ENCODE measurements at regions of chr6 and their contacts with region 1.

Region 1: GRCh38 chr6:111259089-111259831 is 172.0 kb downstream of the SLC16A10 start:
- DNase-seq: peak; percentile 97
- ATAC-seq: peak; percentile 93
- H3K4me3 Mint-ChIP-seq: peak overlapping the region; percentile 84
- H3K27ac Mint-ChIP-seq: peak overlapping the region; percentile 87
- H3K4me1 Mint-ChIP-seq: peaks cover 30% of the 10 kb centered on the region
- H3K27me3 Mint-ChIP-seq: no peaks in the 10 kb centered on the region
- CTCF ChIP-seq: peak; percentile 89

Region 2: DNA sequence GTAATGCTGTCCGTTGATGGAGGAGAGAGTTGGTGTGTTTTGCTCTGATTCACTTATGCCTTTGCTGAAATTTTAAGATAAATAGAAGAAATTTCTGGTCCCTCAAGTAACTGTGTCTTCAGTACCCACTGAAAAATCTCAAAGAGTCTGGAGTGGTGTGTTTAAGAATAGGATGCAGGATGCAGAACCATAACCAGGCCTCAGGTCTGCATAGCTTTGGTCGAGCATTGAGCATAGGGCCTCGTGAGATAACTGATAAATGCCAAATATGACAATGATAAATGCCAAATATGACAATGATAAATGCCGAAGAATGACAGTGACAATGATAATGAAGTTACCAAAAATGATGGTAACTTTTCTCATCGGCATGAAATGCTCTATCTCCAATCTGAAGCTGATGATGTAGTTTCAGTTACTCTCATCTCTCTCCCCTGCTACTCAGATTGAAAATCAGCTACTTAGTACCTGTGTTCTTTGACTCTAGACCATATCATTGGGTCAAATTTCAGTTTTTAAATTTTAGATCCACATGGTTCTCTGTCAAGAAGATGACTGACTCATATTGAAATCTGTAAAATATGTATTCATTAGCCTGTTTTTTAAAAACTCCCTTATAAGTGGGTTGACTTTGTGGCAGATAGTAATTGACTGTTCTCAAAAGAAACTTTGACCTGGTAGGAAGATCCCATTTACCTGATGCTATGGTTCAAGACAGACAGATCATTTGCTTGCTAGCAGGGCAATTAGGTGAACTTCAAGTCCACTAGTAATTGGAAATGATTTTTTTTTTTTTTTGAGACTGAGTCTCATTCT is 75.3 kb before region 1 on chr6:
- CTCF ChIA-PET with region 1: no interaction called
- POLR2A ChIA-PET with region 1: no interaction called
- intact Hi-C with region 1: no loop called
- DNase-seq: no peak
- ATAC-seq: no peak
- H3K4me3 Mint-ChIP-seq: no peak overlapping the region
- H3K27ac Mint-ChIP-seq: no peak overlapping the region
- H3K4me1 Mint-ChIP-seq: no peaks in the 10 kb centered on the region
- H3K27me3 Mint-ChIP-seq: no peaks in the 10 kb centered on the region
- CTCF ChIP-seq: no peak

Region 3: GRCh38 chr6:111230351-111231089 is 28.7 kb before region 1 on chr6:
- CTCF ChIA-PET with region 1: no interaction called
- POLR2A ChIA-PET with region 1: no interaction called
- intact Hi-C with region 1: no loop called
- DNase-seq: no peak
- ATAC-seq: no peak
- H3K4me3 Mint-ChIP-seq: no peak overlapping the region
- H3K27ac Mint-ChIP-seq: no peak overlapping the region
- H3K4me1 Mint-ChIP-seq: no peaks in the 10 kb centered on the region
- H3K27me3 Mint-ChIP-seq: peaks cover 6% of the 10 kb centered on the region
- CTCF ChIP-seq: no peak

Region 4: DNA sequence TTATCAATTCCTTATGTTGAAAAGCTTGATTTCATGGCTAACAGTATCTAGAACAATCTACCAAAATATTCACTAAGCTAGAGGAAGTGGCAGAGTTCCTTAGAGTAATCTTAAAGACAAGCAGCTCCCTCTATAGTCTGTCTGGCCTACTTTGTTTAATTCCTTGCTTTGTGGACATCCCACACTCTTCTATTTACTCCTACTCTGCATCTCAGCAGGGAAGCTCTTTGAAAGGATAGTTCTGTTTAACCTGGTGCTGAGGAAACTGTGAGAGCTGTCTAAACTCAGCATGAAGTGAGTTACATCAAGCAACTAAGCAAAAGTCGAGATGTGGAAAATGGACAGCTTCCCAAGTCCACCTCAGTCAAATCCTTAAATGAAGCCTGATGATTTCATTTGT is 219.5 kb after region 1 on chr6:
- CTCF ChIA-PET with region 1: interaction called, 86 read pairs
- POLR2A ChIA-PET with region 1: interaction called, 79 read pairs
- intact Hi-C with region 1: loop called (anchors 1 kb)
- DNase-seq: no peak
- ATAC-seq: no peak
- H3K4me3 Mint-ChIP-seq: no peak overlapping the region
- H3K27ac Mint-ChIP-seq: peak overlapping the region; percentile 77
- H3K4me1 Mint-ChIP-seq: peaks cover 33% of the 10 kb centered on the region
- H3K27me3 Mint-ChIP-seq: no peaks in the 10 kb centered on the region
- CTCF ChIP-seq: no peak

Region 5: GRCh38 chr6:111605100-111605751 is 346.0 kb after region 1 on chr6:
- CTCF ChIA-PET with region 1: interaction called, 3 read pairs
- POLR2A ChIA-PET with region 1: interaction called, 14 read pairs
- intact Hi-C with region 1: loop called (anchors 1 kb)
- DNase-seq: peak; percentile 23
- ATAC-seq: peak; percentile 43
- H3K4me3 Mint-ChIP-seq: peak overlapping the region; percentile 90
- H3K27ac Mint-ChIP-seq: peak overlapping the region; percentile 92
- H3K4me1 Mint-ChIP-seq: peaks cover 44% of the 10 kb centered on the region
- H3K27me3 Mint-ChIP-seq: no peaks in the 10 kb centered on the region
- CTCF ChIP-seq: no peak

Region 6: DNA sequence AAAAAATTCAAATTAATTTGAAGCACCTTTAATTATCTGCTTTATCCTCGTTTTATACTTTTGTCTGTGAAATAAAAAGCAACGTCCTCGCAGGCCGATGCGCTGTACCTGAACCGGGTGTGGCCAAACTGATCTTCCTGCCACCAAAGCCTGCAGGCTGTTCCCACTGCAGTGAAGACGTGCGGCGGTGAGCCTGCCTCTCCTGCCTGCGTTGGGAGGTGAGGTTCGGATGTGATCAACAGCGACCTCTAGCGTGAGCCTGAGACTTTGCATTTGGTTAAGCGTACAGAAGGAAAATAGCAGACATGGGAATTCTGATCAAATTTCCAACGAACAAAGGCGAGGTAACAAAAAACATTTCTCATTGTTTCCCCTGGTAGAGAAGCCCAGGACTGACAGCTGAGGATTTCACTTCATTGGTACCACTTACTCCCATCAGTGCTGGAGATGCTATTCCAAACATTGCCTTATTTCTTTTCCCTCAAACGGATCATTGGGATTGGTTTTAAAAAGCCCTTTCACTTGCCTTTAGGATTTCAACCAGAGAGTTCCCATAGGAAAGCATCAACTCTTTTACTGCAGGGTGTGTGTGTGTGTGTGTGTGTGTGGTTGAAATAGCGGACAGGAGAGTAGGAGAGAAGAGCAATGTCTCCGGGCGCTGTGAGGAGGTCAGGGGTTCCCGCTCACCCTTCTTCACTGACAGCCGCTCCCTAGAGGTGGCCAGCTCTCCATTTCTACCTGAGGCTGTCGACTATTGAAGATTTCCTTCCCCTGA is 738.0 kb after region 1 on chr6:
- CTCF ChIA-PET with region 1: no interaction called
- POLR2A ChIA-PET with region 1: no interaction called
- intact Hi-C with region 1: loop called (anchors 1 kb)
- DNase-seq: peak; percentile 49
- ATAC-seq: peak; percentile 90
- H3K4me3 Mint-ChIP-seq: peak overlapping the region; percentile 42
- H3K27ac Mint-ChIP-seq: no peak overlapping the region
- H3K4me1 Mint-ChIP-seq: peaks cover 6% of the 10 kb centered on the region
- H3K27me3 Mint-ChIP-seq: peaks cover 2% of the 10 kb centered on the region
- CTCF ChIP-seq: no peak